ENCODE measurements at regions of chr10 and their contacts with region 1.

Region 1: DNA sequence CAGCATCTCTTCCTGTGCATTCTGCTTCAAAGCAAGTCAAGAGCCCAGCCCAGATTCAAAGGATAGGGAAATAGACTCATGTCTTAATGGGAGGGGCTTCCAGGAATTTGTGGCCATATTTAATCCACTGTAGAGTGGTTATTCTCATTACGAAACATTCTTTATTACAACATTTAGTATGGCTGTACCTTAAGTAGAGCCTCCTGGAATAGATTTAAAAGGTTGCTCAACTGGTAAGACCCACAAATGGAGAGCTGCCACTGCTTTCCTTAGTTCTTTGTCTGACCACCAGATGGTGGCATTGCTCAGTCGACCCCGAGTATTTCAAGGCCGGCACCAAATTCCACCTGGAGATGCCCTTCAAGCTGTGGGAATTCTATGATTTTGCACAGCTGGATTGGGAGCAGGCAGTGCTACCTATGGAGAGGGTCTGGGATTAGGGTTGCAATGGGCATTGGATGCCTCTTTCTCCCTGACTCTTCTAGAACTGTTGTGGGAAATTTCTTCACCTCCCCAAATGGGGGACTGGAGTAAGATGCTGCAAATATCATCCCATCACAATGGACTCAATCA is 102.2 kb downstream of the RBM20 start:
- DNase-seq: no peak
- ATAC-seq: peak; percentile 46

Region 2: GRCh38 chr10:110698782-110699201 is 47.5 kb before region 1 on chr10:
- intact Hi-C with region 1: loop called (anchors 2 kb)
- DNase-seq: no peak
- ATAC-seq: peak; percentile 80

Region 3: DNA sequence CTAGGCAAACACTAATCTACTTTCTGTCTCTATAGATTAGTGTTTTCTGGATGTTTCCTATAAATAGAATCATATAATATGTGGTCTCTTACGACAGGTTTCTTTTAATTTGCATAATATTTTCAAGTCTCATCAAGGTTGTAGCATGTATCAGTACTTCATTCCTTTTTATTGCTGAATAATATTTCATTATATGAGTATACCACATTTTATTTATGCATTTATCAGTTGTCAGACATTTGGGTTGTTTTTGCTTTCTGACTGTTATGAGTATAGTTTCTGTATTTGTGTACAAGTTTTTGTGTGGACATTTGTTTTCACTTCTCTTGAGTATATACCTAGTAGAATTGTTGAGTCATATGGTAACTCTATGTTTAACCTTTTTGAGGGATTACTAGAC is 221.3 kb after region 1 on chr10:
- intact Hi-C with region 1: no loop called
- DNase-seq: no peak
- ATAC-seq: no peak

Region 4: GRCh38 chr10:111360260-111360925 is 614.1 kb after region 1 on chr10:
- intact Hi-C with region 1: loop called (anchors 10 kb)
- DNase-seq: no peak
- ATAC-seq: peak; percentile 84